ENCODE measurements at regions of chr5 and their contacts with region 1.

Region 1: DNA sequence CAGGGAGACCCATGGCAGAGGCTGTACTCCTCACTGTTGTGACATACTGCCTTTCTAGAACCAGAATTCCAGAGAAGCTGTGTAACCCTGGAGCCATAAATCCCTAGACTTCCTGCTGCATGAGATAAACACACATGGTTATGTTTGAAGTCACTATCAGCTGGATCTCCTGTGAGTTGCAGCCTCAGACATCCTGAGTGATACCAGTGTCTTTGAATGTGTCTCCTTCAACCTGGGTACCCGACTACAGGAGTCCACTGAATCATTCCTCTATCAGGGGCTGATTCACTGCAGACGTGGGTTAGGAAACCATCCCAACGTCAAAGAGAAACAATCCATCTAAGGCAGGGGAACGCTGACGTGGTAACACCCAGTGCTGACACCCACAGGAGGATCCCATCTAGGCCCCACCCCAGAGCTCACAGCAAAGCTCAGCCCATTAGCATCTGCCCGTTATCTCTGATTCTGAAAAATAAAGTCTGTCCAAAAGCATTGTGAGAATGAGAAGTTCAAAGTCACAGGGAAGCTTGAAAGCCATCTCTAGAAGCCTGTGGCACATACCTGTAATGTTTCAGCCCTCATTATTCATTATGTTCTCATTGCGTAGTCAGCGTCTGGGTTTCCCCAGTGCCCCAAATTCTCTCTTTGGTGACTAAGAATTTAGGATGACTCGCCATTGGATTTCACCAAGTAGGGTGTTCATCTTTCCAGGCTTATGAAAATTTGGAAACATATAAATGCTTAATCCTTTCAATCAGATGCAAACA is 36.3 kb upstream of the BASP1 start:
- DNase-seq: no peak
- H3K4me3 ChIP-seq: no peak overlapping the region
- CTCF ChIP-seq: no peak

Region 2: DNA sequence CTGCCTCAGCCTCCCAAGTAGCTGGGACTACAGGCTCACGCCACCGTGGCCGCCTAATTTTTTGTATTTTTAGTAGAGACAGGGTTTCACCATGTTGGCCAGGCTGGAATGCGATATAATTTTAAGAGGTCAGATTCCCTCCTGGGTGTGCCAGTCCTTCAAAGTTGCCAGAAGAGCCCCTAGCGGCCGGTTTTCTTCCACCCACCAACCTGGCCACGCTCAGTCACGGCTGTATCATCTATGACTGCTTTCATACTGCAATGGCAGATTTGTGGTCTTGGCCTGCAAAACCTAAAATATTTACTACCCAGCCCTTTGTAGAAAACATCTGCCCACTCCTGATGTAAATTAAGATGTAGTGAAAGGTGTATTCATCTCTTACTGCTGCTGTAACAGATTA is 81.2 kb before region 1 on chr5:
- in situ Hi-C with region 1: loop called (anchors 5 kb)
- DNase-seq: no peak
- H3K4me3 ChIP-seq: no peak overlapping the region
- CTCF ChIP-seq: no peak

Region 3: GRCh38 chr5:17147617-17148016 is 33.5 kb before region 1 on chr5:
- in situ Hi-C with region 1: loop called (anchors 5 kb)
- DNase-seq: no peak
- H3K4me3 ChIP-seq: no peak overlapping the region
- CTCF ChIP-seq: no peak

Measured in astrocyte of the cerebellum (primary cell).